H1 (cell line): ENCODE measurements at regions of chr10 and their contacts with region 1.

Region 1: GRCh38 chr10:68537796-68538195 is 10.5 kb upstream of the SLC25A16 start:
- DNase-seq: no peak
- H3K4me3 ChIP-seq: no peak overlapping the region
- H3K27ac ChIP-seq: no peak overlapping the region
- H3K4me1 ChIP-seq: no peaks in the 10 kb centered on the region
- H3K27me3 ChIP-seq: no peaks in the 10 kb centered on the region
- CTCF ChIP-seq: no peak
- EP300 ChIP-seq: no peak
- POLR2A ChIP-seq: no peak
- RAD21 ChIP-seq: no peak

Region 2: DNA sequence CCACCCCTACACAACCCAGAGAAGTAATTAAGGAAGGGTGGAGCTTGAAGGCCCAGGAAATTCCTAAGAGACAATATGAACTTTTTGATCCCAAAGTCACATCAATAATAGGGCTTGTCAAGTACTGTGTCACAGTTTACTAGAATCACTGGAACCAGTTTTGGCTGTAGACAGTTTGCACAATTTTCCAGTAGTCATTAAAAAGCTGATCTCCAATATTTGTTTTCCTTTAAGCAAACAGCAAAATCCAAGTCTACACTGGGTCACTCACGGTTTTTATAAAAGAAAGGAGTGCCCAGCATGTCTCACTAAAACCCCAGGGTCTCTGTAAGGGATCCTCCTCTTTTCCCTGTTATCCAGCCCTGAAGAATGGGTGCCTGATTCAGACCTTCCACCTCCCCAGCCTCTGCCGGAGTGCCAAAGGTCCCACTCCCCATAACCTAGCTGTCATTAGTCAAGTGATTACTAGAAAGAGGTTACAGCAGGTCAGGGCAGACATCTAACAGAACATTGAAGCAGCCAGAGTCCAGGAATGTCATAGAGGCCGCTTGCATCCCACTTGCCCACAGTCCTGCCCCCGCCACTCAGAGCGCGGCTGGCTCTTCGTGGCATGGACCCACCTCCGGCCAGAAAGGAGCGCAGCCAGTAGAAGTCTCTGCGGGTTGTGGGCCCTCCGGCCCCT is 11.0 kb before region 1 on chr10:
- CTCF ChIA-PET with region 1: interaction called, 3 read pairs
- POLR2A ChIA-PET with region 1: interaction called, 14 read pairs
- DNase-seq: no peak
- H3K4me3 ChIP-seq: peak overlapping the region; percentile 52 to 94 (median 92)
- H3K27ac ChIP-seq: 0 out of 2 replicates have a peak overlapping the region, but pooled peaks have one; percentile 18
- H3K4me1 ChIP-seq: no peaks in the 10 kb centered on the region; a peak in 1 of 7 replicates
- H3K27me3 ChIP-seq: no peaks in the 10 kb centered on the region
- CTCF ChIP-seq: no peak
- EP300 ChIP-seq: no peak
- POLR2A ChIP-seq: no peak
- RAD21 ChIP-seq: no peak